ENCODE measurements at regions of chr18 and their contacts with region 1.

Region 1: DNA sequence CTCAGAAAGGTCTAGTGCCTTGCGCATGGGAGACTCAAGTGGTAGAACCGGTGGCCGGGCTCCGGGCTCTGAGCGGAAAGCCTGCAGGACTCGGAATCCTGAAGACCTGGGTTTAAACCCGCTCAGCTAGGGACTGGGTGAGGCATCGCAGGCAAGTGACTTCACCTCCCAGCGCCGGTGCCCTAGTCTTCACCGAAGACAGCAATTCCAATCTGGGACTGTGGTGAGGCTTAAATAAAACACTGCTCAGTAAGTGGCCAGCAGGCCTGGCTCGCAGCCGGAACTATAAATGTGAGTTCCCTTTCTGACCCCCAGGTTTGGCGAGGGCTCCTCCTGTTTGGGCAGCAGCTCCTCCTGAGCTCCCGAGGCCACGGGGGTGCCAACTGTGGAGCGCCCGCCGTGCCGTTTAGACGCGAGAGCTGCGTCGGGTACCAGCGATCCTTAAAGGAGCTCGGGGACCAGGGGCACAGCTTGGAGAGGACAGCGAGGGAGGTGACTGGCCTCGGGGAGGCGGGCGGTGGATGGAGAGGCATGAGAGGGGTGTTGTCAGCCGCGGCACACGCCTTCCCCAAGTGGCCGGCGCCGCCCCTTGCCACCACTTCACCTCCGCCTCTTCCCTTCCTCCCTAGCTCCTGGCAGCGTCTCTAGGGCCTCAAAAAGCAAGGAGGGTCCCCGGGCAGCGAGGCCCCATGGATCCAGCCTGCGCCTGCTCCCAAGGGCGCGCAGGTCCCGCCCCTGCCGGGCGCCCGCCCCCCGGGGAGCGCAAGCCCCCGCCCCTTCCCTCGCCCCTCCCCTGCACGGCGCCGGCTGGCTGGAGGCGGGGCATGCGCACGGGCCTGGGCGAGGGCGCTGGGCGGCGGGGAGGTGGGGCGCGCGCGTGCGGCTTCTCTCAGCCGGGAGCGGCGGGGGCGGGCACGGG is 736 bp upstream of the MTCL1 start:
- DNase-seq: peak; percentile 92 to 95 (median 93)
- ATAC-seq: peak; percentile 92 to 95 (median 94)
- H3K4me3 ChIP-seq: peak overlapping the region; percentile 67 to 81 (median 77)
- H3K27ac ChIP-seq: peak overlapping the region; percentile 70 to 72 (median 72)
- H3K4me1 ChIP-seq: peaks cover 0 to 17% (median 4%) of the 10 kb centered on the region in 4 donors
- H3K27me3 ChIP-seq: no peaks in the 10 kb centered on the region
- CTCF ChIP-seq: no peak
- POLR2A ChIP-seq: peak; percentile 58

Region 2: DNA sequence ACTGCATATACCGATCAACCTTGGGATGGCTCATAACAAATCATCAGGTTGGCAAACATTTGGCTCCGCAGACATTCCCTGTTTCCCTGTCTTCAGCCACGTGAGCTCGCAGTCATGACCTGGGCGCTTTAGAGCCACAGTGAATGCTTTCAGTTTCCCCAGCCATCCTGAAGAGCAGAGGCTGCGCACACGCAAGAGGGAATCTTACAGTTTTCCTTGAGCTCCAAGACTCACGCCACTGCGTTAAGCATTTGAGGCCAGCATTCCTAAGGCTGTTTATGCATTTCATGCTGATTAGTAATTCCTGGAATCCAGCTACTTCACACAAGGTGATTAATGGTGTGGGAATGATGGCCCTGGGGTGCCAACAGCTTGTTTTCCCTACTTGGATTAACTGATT is 95.8 kb after region 1 on chr18:
- intact Hi-C with region 1: no loop called
- DNase-seq: no peak
- ATAC-seq: no peak
- H3K4me3 ChIP-seq: no peak overlapping the region
- H3K27ac ChIP-seq: no peak overlapping the region
- H3K4me1 ChIP-seq: peaks cover 0 to 6% (median 0%) of the 10 kb centered on the region in 4 donors
- H3K27me3 ChIP-seq: no peaks in the 10 kb centered on the region
- CTCF ChIP-seq: no peak
- POLR2A ChIP-seq: no peak

Region 3: DNA sequence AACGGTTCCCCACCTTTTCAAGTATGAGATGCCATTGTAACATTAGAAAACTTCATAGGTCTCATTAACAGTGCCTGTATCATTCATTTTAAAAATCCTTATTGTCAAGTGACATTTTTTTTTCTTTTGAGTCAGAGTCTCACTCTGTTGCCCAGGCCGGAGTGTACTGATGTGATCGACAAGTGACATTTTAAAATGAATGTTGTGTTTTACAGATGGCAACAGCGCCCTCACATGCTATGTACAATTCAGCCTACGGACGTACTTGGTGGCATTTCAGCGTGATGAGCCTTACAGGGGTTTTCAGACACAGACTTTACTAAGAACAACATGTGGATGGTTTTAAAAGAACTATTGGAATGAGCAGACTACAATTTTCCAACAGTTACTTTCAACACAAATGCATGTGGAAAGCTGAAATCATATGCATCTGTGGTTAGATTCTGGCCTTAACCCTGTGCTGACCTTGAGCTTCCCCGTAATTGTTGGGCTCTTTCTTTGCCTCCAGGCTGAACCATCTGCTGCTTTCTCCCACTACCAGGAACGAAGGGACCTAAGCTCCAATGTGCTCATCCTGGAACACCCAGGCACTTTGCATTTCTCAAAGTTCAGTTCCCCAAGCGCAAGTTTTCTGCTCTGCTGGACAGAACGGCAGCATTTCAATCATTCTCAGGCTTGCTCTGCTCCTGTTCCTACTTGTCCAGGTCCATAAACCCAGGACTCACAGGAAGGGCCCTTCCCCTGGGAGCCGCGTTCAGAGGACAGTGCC is 278.0 kb after region 1 on chr18:
- intact Hi-C with region 1: loop called (anchors 5 to 10 kb)
- DNase-seq: peak in 2 of 3 donors; percentile 28 to 59
- ATAC-seq: peak; percentile 86 to 96 (median 91)
- H3K4me3 ChIP-seq: no peak overlapping the region
- H3K27ac ChIP-seq: no peak overlapping the region
- H3K4me1 ChIP-seq: peaks cover 0 to 5% (median 0%) of the 10 kb centered on the region in 4 donors
- H3K27me3 ChIP-seq: no peaks in the 10 kb centered on the region
- CTCF ChIP-seq: peak; percentile 48 to 67 (median 54)
- POLR2A ChIP-seq: no peak

Region 4: GRCh38 chr18:8988261-8988871 is 283.7 kb after region 1 on chr18:
- intact Hi-C with region 1: loop called (anchors 5 to 10 kb)
- DNase-seq: peak in 2 of 3 donors; percentile 55 to 67
- ATAC-seq: peak; percentile 46 to 59 (median 50)
- H3K4me3 ChIP-seq: no peak overlapping the region
- H3K27ac ChIP-seq: peak overlapping the region; percentile 62 to 97 (median 73)
- H3K4me1 ChIP-seq: peaks cover 0 to 28% (median 12%) of the 10 kb centered on the region in 4 donors
- H3K27me3 ChIP-seq: no peaks in the 10 kb centered on the region
- CTCF ChIP-seq: peak; percentile 52 to 78 (median 74)
- POLR2A ChIP-seq: no peak

Measured in right lobe of liver (tissue), 6 donors.